ENCODE measurements at regions of chr6 and their contacts with region 1.

Region 1: GRCh38 chr6:96897383-96898240 is at the start of gene NDUFAF4:
- DNase-seq: peak; percentile 95
- H3K4me3 ChIP-seq: peak within 1 kb of the TSS; percentile 95
- H3K27ac ChIP-seq: peak within 1 kb of the TSS; percentile 84 to 85
- H3K4me1 ChIP-seq: peaks cover 6 to 15% of the 10 kb centered on the region in 2 experiments; a peak in 3 of 4 replicates
- H3K27me3 ChIP-seq: no peaks in the 10 kb centered on the region
- CTCF ChIP-seq: peak; percentile 88
- EP300 ChIP-seq: 0 out of 4 replicates have a peak, but pooled peaks of 1 of the 2 experiments have one; percentile 6
- RAD21 ChIP-seq: peak; percentile 63
- polyA plus RNA-seq, gene NDUFAF4: 15.9 and 16.7 TPM in 2 replicates

Region 2: GRCh38 chr6:96626759-96627364 is 270.8 kb before region 1 on chr6:
- CTCF ChIA-PET with region 1: interaction called, 60 read pairs
- POLR2A ChIA-PET with region 1: no interaction called
- DNase-seq: peak; percentile 51
- H3K4me3 ChIP-seq: no peak overlapping the region
- H3K27ac ChIP-seq: no peak overlapping the region
- H3K4me1 ChIP-seq: no peaks in the 10 kb centered on the region
- H3K27me3 ChIP-seq: no peaks in the 10 kb centered on the region
- CTCF ChIP-seq: peak; percentile 67
- EP300 ChIP-seq: no peak
- RAD21 ChIP-seq: peak; percentile 84

Region 3: DNA sequence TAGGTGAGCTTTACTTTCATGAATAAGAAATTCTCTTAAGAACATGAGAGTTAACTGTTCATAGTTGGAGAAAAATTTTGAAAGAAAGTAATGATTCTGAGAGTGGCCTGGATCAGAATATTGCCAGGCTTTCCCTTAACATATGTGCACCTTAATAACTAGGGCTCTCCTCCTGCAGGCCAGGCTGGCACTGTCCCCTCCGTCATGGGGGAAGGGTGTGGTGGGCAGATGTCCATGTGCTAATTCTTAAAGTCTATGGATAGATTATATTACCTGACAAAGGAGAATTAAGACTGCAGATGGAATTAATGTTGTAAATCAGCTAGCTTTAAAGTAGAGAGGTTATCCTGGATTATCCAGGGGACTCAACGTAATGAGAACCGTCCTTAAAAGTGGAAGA is 16.0 kb after region 1 on chr6:
- CTCF ChIA-PET with region 1: interaction called, 34 read pairs
- POLR2A ChIA-PET with region 1: no interaction called
- DNase-seq: no peak
- H3K4me3 ChIP-seq: no peak overlapping the region
- H3K27ac ChIP-seq: no peak overlapping the region
- H3K4me1 ChIP-seq: no peaks in the 10 kb centered on the region
- H3K27me3 ChIP-seq: no peaks in the 10 kb centered on the region
- CTCF ChIP-seq: no peak
- EP300 ChIP-seq: no peak
- RAD21 ChIP-seq: no peak

Region 4: DNA sequence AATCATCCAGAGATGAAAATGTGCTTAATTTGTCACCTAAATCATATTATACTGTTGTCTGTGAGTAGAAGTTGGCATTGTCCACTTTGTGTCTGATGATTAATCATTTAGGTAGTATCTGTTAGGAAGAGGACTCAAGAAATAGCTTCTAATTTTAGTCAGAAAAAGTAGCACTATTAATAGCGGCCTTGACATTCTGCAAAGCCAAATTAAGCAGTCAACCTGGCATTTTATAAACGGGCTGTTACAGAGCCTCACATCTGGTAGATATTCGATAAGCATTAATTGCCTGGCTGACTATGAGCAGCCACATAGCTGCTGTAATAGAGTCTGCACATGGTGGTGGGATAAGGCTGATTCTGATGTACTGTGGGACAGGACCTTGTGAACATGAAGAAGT is 126.4 kb after region 1 on chr6:
- CTCF ChIA-PET with region 1: interaction called, 23 read pairs
- POLR2A ChIA-PET with region 1: no interaction called
- DNase-seq: peak; percentile 68
- H3K4me3 ChIP-seq: no peak overlapping the region
- H3K27ac ChIP-seq: no peak overlapping the region; a peak in 1 of 4 replicates
- H3K4me1 ChIP-seq: peaks cover 0 to 9% of the 10 kb centered on the region in 2 experiments; a peak in 2 of 4 replicates
- H3K27me3 ChIP-seq: no peaks in the 10 kb centered on the region
- CTCF ChIP-seq: no peak
- EP300 ChIP-seq: peak in 1 of 2 experiments; percentile 84; a peak in 2 of 4 replicates
- RAD21 ChIP-seq: 0 out of 2 replicates have a peak, but pooled peaks have one; percentile 19

Region 5: GRCh38 chr6:97049253-97050011 is 151.8 kb after region 1 on chr6:
- CTCF ChIA-PET with region 1: interaction called, 18 read pairs
- POLR2A ChIA-PET with region 1: no interaction called
- DNase-seq: no peak
- H3K4me3 ChIP-seq: no peak overlapping the region
- H3K27ac ChIP-seq: no peak overlapping the region
- H3K4me1 ChIP-seq: peaks cover 0 to 5% of the 10 kb centered on the region in 2 experiments; a peak in 2 of 4 replicates
- H3K27me3 ChIP-seq: no peaks in the 10 kb centered on the region
- CTCF ChIP-seq: no peak
- EP300 ChIP-seq: no peak
- RAD21 ChIP-seq: no peak

Measured in SK-N-SH (cell line).